ENCODE measurements at regions of chr1 and their contacts with region 1.

Region 1: GRCh38 chr1:26284597-26285360 is 4.9 kb downstream of the SH3BGRL3 start:
- DNase-seq: peak; percentile 94
- H3K4me3 ChIP-seq: peak overlapping the region in 1 of 8 donors; percentile 36
- H3K27ac ChIP-seq: peak overlapping the region; percentile 84 to 99 (median 94)
- H3K4me1 ChIP-seq: peaks cover 71 to 98% (median 94%) of the 10 kb centered on the region in 6 donors
- H3K27me3 ChIP-seq: no peaks in the 10 kb centered on the region
- CTCF ChIP-seq: peak; percentile 74 to 90 (median 79)
- POLR2A ChIP-seq: peak in 1 of 3 donors; percentile 6

Region 2: GRCh38 chr1:26321315-26322041 is 36.7 kb after region 1 on chr1:
- intact Hi-C with region 1: loop called (anchors 2 kb)
- DNase-seq: peak; percentile 98
- H3K4me3 ChIP-seq: peak overlapping the region in 5 of 8 donors; percentile 4 to 85 (median 72)
- H3K27ac ChIP-seq: peak overlapping the region in 6 of 8 donors; percentile 17 to 92 (median 87)
- H3K4me1 ChIP-seq: peaks cover 24 to 71% (median 51%) of the 10 kb centered on the region in 6 donors
- H3K27me3 ChIP-seq: no peaks in the 10 kb centered on the region
- CTCF ChIP-seq: peak; percentile 90 to 99 (median 96)
- POLR2A ChIP-seq: no peak

Measured in spleen (tissue), 13 donors.